AG04449 (cell line): ENCODE measurements at regions of chr22 and their contacts with region 1.

Region 1: GRCh38 chr22:40525249-40525884 is 111.2 kb downstream of the MRTFA start:
- DNase-seq: no peak
- H3K4me3 ChIP-seq: no peak overlapping the region
- CTCF ChIP-seq: peak; percentile 59

Region 2: DNA sequence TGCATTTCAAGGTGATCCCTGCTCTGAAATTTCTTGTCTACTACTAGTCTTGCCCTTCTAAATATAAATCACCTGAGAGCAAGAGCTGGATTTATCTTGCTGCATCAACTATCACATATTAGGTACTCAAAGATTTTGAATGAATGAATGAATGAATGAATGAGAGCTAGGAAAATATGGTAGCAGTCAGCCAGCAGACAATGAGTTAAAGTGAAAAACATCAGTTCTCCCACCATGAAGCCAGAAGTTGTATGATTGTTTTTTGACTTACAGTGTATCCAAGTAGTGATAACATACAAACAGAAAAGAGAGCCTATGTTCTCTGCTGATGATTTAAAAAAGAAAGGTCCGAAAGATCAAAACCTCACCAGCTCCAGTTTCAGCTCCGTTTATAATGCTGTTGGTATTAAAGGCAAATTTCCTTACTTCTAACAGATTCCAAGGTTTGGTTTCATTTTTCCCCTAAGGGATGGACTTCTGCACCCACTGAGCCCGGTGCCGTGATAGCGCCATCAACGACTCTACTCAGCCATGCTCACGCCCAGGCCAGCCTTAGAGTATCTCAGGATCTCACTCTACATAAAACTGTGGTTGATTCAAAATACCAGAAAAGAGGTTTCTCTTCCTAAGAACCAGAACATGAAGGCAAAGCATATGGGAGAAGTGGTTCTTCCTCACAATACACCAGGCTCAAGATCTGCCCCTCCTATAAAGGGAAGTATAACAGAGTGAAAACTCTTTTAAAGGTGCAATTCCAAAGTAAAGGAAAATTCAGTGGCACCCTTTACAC is 63.0 kb before region 1 on chr22:
- CTCF ChIA-PET with region 1: no interaction called
- POLR2A ChIA-PET with region 1: no interaction called
- DNase-seq: no peak
- H3K4me3 ChIP-seq: no peak overlapping the region
- CTCF ChIP-seq: no peak

Region 3: DNA sequence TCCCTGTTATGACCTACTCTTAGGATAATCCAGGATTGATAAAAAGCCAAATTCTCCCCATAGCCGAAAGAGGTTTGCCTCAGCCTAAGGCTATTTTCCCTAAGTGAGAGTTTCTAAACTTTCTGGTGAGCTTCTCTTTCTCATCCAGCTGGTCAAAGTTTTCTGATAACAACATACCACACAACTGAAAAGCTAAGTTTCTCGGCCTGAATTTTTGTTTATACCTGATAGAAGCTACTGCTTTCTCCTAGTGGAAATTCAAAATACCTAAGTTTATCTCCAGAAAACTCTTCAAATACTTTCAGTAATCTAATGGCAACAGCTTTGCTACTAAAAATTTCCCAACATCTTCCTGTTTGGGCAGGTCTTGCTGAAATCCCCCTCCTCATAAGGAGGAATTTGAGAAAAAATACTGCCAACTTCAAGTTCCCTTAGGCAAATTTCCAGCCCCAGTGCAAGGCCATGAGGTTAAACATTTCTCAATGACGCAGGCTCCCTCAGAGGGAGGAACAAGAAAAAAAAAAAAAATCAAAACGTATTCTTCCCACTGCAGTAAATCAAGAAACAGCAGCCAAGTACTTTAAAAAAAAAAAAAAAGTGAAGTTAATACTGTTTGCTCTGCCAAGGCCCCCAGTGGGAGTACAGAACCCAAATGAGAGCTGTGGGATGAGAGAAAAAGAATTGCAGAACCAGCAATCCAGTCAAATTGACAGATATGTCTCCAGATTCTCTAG is 15.8 kb before region 1 on chr22:
- CTCF ChIA-PET with region 1: interaction called, 17 read pairs
- POLR2A ChIA-PET with region 1: interaction called, 5 read pairs
- DNase-seq: peak; percentile 89
- H3K4me3 ChIP-seq: no peak overlapping the region
- CTCF ChIP-seq: no peak

Region 4: DNA sequence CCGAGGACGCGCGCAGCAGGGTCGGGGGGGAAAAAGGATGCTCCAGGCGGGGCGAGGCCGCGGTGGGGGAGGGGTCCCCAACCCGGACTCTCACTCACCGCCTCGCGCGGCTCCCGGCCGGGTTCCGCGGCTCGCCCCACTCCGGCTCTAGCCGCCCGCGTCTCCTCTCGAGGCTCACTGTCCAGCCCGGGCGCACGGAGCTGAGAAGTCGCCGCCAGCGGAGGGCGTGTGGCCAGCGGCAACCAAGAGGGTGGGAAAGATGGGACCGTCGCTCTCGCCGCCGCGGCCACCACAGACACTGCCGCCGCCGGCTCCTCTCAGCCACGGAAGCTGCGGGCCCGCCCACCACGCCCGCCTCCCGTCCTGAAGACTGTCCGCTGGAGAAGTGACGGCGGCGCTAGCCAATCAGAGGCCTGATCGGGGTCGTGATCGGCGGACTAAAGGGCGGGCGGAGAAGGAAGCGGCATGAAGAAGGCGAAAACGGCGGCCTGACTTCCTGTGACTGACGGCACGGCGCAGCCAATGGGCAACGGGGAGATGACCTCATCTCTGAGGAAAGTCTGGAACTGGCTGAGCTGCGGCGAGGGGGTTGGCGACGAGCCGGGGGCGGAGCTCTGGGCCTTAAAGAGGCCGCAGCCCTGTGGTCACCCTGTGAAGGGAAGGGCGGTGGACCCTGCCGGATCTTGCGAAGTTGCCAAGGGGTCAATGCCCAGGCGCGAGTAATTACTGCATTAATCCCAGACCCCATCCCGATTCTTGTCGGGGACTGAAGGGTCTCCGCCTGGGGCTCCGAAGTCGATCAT is 111.2 kb after region 1 on chr22 and contains the start of gene MRTFA:
- CTCF ChIA-PET with region 1: interaction called, 39 read pairs
- POLR2A ChIA-PET with region 1: no interaction called
- DNase-seq: peak; percentile 96
- H3K4me3 ChIP-seq: peak within 1 kb of the TSS; percentile 90
- CTCF ChIP-seq: no peak